ENCODE measurements at regions of chr1 and their contacts with region 1.

Region 1: DNA sequence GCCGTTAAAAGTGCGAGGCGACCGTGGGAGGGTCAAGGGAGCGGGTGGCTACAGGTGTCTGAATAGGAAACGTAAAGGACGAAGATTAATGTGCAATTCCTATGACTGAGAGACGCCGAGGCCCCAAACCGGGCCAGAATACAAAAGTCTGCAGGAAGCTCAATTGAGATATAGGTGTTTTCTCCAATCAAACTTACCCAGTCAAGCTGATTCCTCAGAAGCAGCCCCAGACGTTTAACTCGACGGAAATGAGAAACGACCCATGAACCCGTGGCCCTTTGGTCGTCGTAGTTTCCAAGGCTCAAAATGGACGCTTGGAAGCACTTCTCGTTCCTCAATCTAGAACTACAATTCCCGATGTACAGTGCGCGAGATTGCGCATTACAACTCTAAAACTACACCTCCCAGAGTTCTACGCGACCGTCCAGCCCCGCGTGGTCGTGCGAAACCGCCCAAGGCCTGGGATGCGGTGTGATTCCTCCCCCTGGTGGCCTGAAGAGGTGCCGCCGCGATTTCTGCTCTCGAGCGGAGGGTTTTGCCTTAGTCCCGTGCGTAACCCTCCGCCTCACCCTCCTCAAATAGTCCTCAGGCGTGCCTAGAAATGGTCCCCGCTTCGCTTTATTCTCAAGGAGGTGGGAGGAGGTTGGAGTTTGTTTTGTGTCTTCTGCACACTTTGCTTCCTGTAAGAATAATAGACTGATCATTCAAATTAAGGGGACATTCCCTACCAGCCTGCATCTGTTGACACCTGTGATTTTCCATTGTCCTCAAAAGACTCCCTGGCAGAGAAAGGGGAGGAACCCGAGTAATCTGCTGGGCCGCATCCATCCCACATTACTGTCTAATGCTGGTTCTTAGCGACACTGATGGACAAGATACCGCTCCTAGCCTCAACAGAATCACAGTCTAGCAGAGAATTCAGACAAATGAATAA is at the start of gene PAFAH2:
- DNase-seq: peak; percentile 99
- H3K4me3 Mint-ChIP-seq: peak within 1 kb of the TSS; percentile 94
- H3K27ac Mint-ChIP-seq: peak within 1 kb of the TSS; percentile 94
- H3K4me1 Mint-ChIP-seq: peaks cover 7% of the 10 kb centered on the region
- H3K27me3 Mint-ChIP-seq: no peaks in the 10 kb centered on the region
- CTCF ChIP-seq: peak; percentile 94
- total RNA-seq, gene PAFAH2: 12.8 and 22.3 TPM in 2 replicates

Region 2: GRCh38 chr1:25819576-25820246 is 178.4 kb before region 1 on chr1 and contains the start of gene MTFR1L:
- CTCF ChIA-PET with region 1: interaction called, 10 read pairs
- POLR2A ChIA-PET with region 1: interaction called, 39 read pairs
- intact Hi-C with region 1: loop called (anchors 5 kb)
- DNase-seq: peak; percentile 88
- H3K4me3 Mint-ChIP-seq: peak within 1 kb of the TSS; percentile 79
- H3K27ac Mint-ChIP-seq: peak within 1 kb of the TSS; percentile 89
- H3K4me1 Mint-ChIP-seq: peaks cover 33% of the 10 kb centered on the region
- H3K27me3 Mint-ChIP-seq: no peaks in the 10 kb centered on the region
- CTCF ChIP-seq: no peak
- total RNA-seq, gene MTFR1L: 39.3 and 42.2 TPM in 2 replicates

Region 3: DNA sequence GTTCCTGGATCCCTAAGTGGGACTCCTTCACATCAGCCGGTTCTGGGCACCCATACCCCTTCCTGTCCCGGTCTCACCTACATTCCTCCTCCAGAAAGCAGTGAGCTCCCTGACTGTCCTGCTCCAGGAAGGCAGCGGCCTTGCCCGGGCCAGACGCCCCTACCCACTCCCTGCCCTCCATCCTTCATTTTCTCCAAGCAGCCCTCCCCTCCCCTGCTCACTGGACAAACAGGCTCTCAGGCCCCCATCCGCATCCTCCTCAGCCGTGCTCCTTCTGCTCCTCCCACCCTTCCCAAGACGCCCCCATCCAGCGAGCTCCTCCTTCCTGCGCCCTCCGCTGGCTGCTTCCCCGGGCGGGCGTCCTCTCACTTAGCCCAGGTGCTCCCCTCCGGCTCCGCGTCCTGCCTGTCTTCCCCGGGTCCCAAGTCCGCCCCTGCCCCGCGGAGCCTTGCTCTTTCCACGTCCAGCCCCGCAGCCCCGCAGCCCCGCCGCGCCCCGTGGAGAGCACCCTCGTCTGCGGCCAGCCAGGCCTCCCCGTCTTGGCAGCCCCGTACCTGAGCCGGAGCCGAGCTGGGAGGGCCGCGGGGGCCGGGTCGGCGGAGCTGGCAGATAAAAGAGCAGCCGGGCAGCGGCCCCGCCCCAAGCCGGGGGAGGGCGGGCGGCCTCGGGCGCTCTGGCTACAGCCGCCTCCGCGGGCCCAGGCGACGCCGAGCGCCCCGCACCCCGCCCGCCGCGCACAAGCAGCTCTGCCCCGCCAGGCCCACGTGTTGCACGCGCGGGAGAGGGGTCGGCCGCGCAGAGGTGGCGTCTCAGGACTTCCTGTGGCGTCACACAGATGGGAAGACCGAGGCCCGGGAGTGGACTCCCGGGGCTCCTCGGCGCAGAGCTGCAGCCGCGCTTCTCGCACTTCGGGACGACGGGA is 122.9 kb before region 1 on chr1 and contains the start of gene PAQR7:
- CTCF ChIA-PET with region 1: interaction called, 4 read pairs
- POLR2A ChIA-PET with region 1: interaction called, 10 read pairs
- intact Hi-C with region 1: no loop called
- DNase-seq: peak; percentile 57
- H3K4me3 Mint-ChIP-seq: peak within 1 kb of the TSS; percentile 81
- H3K27ac Mint-ChIP-seq: peak within 1 kb of the TSS; percentile 54
- H3K4me1 Mint-ChIP-seq: peaks cover 15% of the 10 kb centered on the region
- H3K27me3 Mint-ChIP-seq: no peaks in the 10 kb centered on the region
- CTCF ChIP-seq: no peak
- total RNA-seq, gene PAQR7: 3.8 and 4.4 TPM in 2 replicates

Region 4: GRCh38 chr1:25895365-25895993 is 102.6 kb before region 1 on chr1:
- CTCF ChIA-PET with region 1: interaction called, 106 read pairs
- POLR2A ChIA-PET with region 1: interaction called, 38 read pairs
- intact Hi-C with region 1: loop called (anchors 1 kb)
- DNase-seq: peak; percentile 85
- H3K4me3 Mint-ChIP-seq: peak overlapping the region; percentile 1
- H3K27ac Mint-ChIP-seq: peak overlapping the region; percentile 16
- H3K4me1 Mint-ChIP-seq: peaks cover 5% of the 10 kb centered on the region
- H3K27me3 Mint-ChIP-seq: no peaks in the 10 kb centered on the region
- CTCF ChIP-seq: peak; percentile 95

Region 5: DNA sequence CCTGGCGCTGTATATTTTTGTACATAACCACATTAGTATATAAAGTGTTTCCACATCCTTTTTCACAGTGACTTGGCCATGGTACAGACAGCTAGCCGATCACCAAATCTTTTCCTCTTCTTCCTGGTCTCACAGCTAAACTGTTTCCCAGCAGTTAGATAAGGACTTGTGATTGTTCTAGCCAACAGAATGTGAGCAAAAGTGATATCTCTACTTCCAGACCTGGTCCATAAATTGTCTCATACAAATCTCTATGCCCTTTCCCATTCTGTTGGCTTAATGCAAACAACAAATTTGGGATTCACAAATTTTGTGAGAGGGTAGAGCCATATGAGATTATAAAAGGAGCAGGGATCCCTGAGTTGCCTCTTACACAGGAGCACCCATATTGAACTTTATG is 19.7 kb before region 1 on chr1:
- CTCF ChIA-PET with region 1: interaction called, 3 read pairs
- POLR2A ChIA-PET with region 1: interaction called, 14 read pairs
- intact Hi-C with region 1: no loop called
- DNase-seq: no peak
- H3K4me3 Mint-ChIP-seq: no peak overlapping the region
- H3K27ac Mint-ChIP-seq: no peak overlapping the region
- H3K4me1 Mint-ChIP-seq: no peaks in the 10 kb centered on the region
- H3K27me3 Mint-ChIP-seq: no peaks in the 10 kb centered on the region
- CTCF ChIP-seq: no peak

Measured in MCF 10A (cell line).